Endothelial cell of umbilical vein (primary cell): ENCODE measurements at regions of chr11 and their contacts with region 1.

Region 1: DNA sequence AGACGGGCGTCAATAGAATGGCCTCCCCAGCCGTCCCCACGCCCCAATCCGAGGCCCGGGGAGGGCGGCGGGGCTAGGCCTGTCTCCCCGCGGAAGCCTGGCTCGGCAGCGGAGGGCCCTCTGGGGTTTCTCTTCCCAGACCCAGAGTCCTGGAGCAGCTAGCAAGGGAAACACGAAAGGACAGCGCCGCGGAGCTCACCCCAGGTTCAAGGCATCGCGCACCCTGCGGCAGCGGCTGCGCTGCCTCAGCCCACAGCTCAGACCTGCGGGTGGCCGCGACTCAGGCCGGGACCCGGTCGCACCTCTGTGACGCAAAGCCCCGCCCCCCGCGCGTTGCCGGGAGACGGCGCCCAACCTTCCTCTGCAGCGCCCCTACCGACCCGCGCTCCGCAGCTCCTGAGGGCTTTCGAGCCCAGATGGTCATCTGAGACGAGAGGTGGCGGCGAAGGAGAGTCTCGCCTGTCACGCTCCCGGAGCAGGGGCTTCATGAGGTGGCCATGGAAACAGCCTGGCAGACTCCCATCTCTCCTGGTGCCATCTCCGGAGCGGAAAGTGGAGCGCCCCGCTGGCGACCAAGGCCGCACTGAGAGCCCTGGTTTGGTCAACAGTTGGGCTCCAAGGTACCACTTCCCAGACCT is at the start of gene RNF141:
- DNase-seq: peak; percentile 94
- H3K4me3 ChIP-seq: peak within 1 kb of the TSS; percentile 37 to 83 (median 59)
- H3K27ac ChIP-seq: peak within 1 kb of the TSS; percentile 57
- H3K4me1 ChIP-seq: peaks cover 10% of the 10 kb centered on the region
- H3K27me3 ChIP-seq: no peaks in the 10 kb centered on the region
- CTCF ChIP-seq: peak; percentile 87 to 93
- POLR2A ChIP-seq: peak; percentile 94
- total RNA-seq, gene RNF141: 31.8 and 32.4 TPM in 2 replicates

Region 2: DNA sequence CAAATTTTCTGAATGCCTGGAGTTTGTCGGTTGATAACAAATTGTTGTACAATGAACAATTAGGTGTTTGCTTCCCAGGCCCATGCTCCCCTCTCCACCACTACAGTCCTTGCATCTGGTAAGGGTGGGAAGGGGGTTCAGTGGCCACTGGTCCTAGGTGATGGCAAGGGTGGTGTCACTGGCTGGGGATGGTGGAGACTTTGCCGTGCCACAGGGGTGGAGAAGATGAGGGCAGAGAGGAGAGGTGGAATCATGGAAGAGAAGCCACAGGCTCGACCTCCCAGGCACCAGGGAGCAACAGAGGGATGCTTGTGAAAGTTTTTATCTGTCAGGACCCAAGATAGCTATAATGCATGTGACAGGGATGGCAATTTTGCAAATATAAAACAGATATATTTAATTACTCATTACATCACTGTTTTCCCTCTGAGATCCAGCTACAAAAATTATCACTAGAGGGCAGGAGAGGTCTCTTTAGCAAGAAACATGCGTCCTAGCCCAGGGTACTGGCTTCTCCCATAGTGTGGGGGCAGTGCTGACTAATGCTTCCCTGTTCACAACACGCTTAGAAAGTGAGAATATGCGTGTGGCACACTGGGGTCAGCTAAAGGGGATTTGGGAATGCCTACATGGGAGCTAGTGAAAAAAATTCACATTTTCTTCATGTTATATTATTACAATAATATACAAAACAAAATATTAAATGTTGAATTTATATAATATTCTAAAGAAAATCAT is 135.0 kb before region 1 on chr11:
- CTCF ChIA-PET with region 1: interaction called, 10 read pairs
- POLR2A ChIA-PET with region 1: no interaction called
- dilution Hi-C with region 1: no loop called
- intact Hi-C with region 1: no loop called
- DNase-seq: peak; percentile 89
- H3K4me3 ChIP-seq: no peak overlapping the region
- H3K27ac ChIP-seq: no peak overlapping the region
- H3K4me1 ChIP-seq: peaks cover 26% of the 10 kb centered on the region
- H3K27me3 ChIP-seq: no peaks in the 10 kb centered on the region
- CTCF ChIP-seq: peak; percentile 56 to 73
- POLR2A ChIP-seq: no peak

Region 3: GRCh38 chr11:10490398-10491241 is 50.4 kb before region 1 on chr11:
- CTCF ChIA-PET with region 1: interaction called, 3 read pairs
- POLR2A ChIA-PET with region 1: no interaction called
- dilution Hi-C with region 1: no loop called
- intact Hi-C with region 1: loop called (anchors 1 kb)
- DNase-seq: peak; percentile 89
- H3K4me3 ChIP-seq: no peak overlapping the region
- H3K27ac ChIP-seq: peak overlapping the region; percentile 65
- H3K4me1 ChIP-seq: peaks cover 17% of the 10 kb centered on the region
- H3K27me3 ChIP-seq: no peaks in the 10 kb centered on the region
- CTCF ChIP-seq: no peak
- POLR2A ChIP-seq: no peak

Region 4: GRCh38 chr11:10526974-10527918 is 13.8 kb before region 1 on chr11:
- CTCF ChIA-PET with region 1: interaction called, 15 read pairs
- POLR2A ChIA-PET with region 1: interaction called, 5 read pairs
- dilution Hi-C with region 1: no loop called
- intact Hi-C with region 1: loop called (anchors 1 kb)
- DNase-seq: peak; percentile 39
- H3K4me3 ChIP-seq: no peak overlapping the region
- H3K27ac ChIP-seq: no peak overlapping the region
- H3K4me1 ChIP-seq: peaks cover 67% of the 10 kb centered on the region
- H3K27me3 ChIP-seq: no peaks in the 10 kb centered on the region
- CTCF ChIP-seq: no peak
- POLR2A ChIP-seq: no peak

Region 5: DNA sequence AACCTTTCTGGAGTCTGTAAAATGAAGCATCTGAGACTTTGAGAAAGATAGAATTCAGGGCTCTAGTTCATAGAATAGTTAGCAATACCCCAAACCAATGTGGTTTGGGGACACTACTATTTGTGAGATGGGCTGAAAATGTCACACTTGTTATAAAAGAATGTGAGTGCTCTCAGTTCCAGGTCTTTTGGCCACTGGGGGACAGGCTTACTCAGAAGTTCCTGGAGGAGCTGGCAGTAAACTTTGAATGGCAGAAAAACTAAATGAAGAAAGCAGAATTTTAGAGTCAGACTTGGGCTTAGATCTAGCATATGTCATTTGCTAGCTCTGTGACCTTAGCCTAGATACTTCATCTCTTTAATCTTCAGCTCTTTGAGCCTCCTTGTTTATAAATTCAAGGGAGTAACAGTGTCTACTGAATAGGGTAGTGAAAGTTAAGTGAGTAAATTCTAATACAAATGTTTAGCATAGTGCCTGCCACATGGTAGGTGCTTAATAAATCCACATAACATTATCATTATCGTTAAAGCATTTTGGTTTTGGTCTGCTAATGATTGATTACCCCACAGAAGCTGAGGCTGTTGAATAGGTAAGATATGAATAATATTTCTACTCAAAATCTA is 23.8 kb after region 1 on chr11:
- CTCF ChIA-PET with region 1: interaction called, 8 read pairs
- POLR2A ChIA-PET with region 1: no interaction called
- dilution Hi-C with region 1: no loop called
- intact Hi-C with region 1: loop called (anchors 2 kb)
- DNase-seq: peak; percentile 49
- H3K4me3 ChIP-seq: no peak overlapping the region
- H3K27ac ChIP-seq: no peak overlapping the region
- H3K4me1 ChIP-seq: peaks cover 7% of the 10 kb centered on the region
- H3K27me3 ChIP-seq: no peaks in the 10 kb centered on the region
- CTCF ChIP-seq: peak; percentile 8 to 51
- POLR2A ChIP-seq: no peak

Region 6: DNA sequence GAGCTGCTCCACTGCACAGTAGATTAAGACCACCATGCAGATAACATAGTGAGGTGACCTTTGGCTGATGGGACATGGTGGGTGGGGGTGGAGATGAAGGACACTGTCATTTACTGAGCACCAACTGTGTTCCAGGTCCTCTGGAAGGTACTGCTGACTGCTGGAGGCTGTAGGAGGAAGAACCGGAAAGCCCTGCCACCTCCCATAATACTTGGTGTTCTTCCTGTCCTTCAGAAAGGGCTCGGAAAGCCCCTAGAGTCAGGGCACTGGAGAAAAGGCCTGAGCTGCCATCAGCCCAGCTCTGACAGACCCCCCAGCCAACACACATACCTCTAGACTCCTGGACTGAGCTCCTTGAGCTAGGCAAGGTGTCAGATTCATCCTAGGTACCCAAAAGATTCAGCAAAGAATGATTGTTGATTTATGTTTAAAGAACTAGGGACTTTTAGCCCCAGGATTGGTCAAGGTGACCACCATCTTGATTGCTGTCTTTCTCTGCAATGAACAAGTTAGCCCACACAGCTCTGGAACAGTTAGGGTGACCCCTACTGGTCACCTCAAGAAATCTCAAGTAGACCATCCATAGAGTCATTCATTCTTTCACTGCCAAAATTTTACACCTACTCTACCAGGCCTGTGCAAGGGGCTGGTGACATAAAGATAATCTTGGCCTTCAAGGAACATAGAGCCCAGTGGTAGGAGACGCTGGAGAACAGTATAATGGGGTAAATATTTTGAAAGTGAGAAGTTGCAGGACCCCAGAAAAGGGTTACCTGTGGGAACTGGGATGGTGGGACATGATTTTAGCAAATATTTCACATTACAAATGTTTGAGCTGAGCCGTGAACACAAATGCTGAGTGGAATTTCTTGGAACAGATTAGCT is 113.1 kb after region 1 on chr11:
- CTCF ChIA-PET with region 1: interaction called, 17 read pairs
- POLR2A ChIA-PET with region 1: no interaction called
- dilution Hi-C with region 1: no loop called
- intact Hi-C with region 1: no loop called
- DNase-seq: peak; percentile 73
- H3K4me3 ChIP-seq: no peak overlapping the region
- H3K27ac ChIP-seq: no peak overlapping the region
- H3K4me1 ChIP-seq: peaks cover 21% of the 10 kb centered on the region
- H3K27me3 ChIP-seq: no peaks in the 10 kb centered on the region
- CTCF ChIP-seq: peak; percentile 72 to 78
- POLR2A ChIP-seq: no peak